Breast epithelium (tissue), 4 donors: ENCODE measurements at regions of chr20 and their contacts with region 1.

Region 1: GRCh38 chr20:19141998-19142397 is 70.4 kb upstream of the SLC24A3 start:
- DNase-seq: no peak
- H3K4me3 ChIP-seq: no peak overlapping the region
- H3K27ac ChIP-seq: no peak overlapping the region
- H3K4me1 ChIP-seq: no peaks in the 10 kb centered on the region
- H3K27me3 ChIP-seq: no peaks in the 10 kb centered on the region
- CTCF ChIP-seq: no peak
- POLR2A ChIP-seq: no peak

Region 2: DNA sequence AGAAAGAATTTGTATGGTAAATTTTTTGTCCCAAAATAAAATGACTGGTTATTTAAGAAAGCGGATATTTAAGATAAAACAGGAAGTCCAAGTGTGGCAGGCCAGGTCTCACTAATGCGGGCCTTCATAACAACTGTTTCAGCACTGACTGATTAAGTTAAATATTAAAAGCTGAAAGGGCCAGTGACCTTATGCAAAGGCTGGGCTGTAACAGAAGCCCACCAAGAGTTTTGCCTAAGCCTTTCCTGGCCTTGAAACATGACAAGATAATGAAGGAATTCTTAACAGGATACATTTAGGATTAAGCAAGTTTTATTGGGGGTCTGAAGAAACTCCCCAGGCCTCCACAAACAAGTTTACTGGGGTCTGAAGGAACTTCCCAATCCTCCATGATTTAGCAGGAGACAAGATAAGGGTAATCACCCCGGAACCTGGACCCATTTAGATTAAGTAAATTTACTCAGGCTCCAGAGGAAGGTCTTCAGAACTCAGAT is 817.4 kb before region 1 on chr20:
- intact Hi-C with region 1: loop called (anchors 5 kb)
- DNase-seq: no peak
- H3K4me3 ChIP-seq: no peak overlapping the region
- H3K27ac ChIP-seq: no peak overlapping the region
- H3K4me1 ChIP-seq: no peaks in the 10 kb centered on the region
- H3K27me3 ChIP-seq: no peaks in the 10 kb centered on the region
- CTCF ChIP-seq: no peak
- POLR2A ChIP-seq: no peak

Region 3: GRCh38 chr20:19185090-19185489 is 43.1 kb after region 1 on chr20:
- intact Hi-C with region 1: no loop called
- DNase-seq: no peak
- H3K4me3 ChIP-seq: no peak overlapping the region
- H3K27ac ChIP-seq: no peak overlapping the region
- H3K4me1 ChIP-seq: no peaks in the 10 kb centered on the region
- H3K27me3 ChIP-seq: no peaks in the 10 kb centered on the region
- CTCF ChIP-seq: no peak
- POLR2A ChIP-seq: no peak